CD4-positive, alpha-beta T cell (primary cell): ENCODE measurements at regions of chr2 and their contacts with region 1.

Region 1: DNA sequence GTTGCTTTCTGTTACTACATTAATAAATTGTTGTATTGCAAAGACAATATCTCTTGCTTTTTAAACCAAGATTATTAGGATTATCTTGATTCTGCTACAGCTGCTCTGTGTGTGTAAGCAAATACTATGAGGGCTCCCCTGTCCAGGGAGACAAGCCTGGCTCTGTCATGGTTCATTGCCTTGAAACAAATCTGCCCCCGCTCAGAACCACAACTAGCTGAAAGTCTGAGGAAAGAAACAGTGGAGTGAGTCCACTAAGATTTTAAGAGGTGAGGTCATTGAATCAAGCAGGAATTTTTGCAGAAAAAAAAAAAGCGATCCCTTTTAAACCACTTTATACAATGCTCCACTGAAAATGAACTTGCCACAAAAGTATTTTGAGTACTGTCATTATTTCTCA is 30.8 kb upstream of the LRRTM4 start:
- DNase-seq: no peak
- ATAC-seq: no peak
- H3K4me3 ChIP-seq: no peak overlapping the region
- H3K4me3 Mint-ChIP-seq: no peak overlapping the region
- H3K27ac ChIP-seq: no peak overlapping the region
- H3K27ac Mint-ChIP-seq: no peak overlapping the region
- H3K4me1 ChIP-seq: no peaks in the 10 kb centered on the region
- H3K4me1 Mint-ChIP-seq: no peaks in the 10 kb centered on the region
- H3K27me3 ChIP-seq: no peaks in the 10 kb centered on the region
- H3K27me3 Mint-ChIP-seq: no peaks in the 10 kb centered on the region
- CTCF ChIP-seq: no peak

Region 2: GRCh38 chr2:77418537-77418936 is 134.4 kb before region 1 on chr2:
- CTCF ChIA-PET with region 1: no interaction called
- POLR2A ChIA-PET with region 1: no interaction called
- intact Hi-C with region 1: no loop called
- DNase-seq: no peak
- ATAC-seq: no peak
- H3K4me3 ChIP-seq: no peak overlapping the region
- H3K4me3 Mint-ChIP-seq: no peak overlapping the region
- H3K27ac ChIP-seq: no peak overlapping the region
- H3K27ac Mint-ChIP-seq: no peak overlapping the region
- H3K4me1 ChIP-seq: no peaks in the 10 kb centered on the region
- H3K4me1 Mint-ChIP-seq: no peaks in the 10 kb centered on the region
- H3K27me3 ChIP-seq: no peaks in the 10 kb centered on the region
- H3K27me3 Mint-ChIP-seq: no peaks in the 10 kb centered on the region
- CTCF ChIP-seq: no peak

Region 3: GRCh38 chr2:77469106-77469505 is 83.8 kb before region 1 on chr2:
- CTCF ChIA-PET with region 1: no interaction called
- POLR2A ChIA-PET with region 1: no interaction called
- intact Hi-C with region 1: no loop called
- DNase-seq: no peak
- ATAC-seq: no peak
- H3K4me3 ChIP-seq: no peak overlapping the region
- H3K4me3 Mint-ChIP-seq: no peak overlapping the region
- H3K27ac ChIP-seq: no peak overlapping the region
- H3K27ac Mint-ChIP-seq: no peak overlapping the region
- H3K4me1 ChIP-seq: no peaks in the 10 kb centered on the region
- H3K4me1 Mint-ChIP-seq: no peaks in the 10 kb centered on the region
- H3K27me3 ChIP-seq: no peaks in the 10 kb centered on the region
- H3K27me3 Mint-ChIP-seq: no peaks in the 10 kb centered on the region
- CTCF ChIP-seq: no peak

Region 4: GRCh38 chr2:77512507-77512906 is 40.4 kb before region 1 on chr2:
- CTCF ChIA-PET with region 1: no interaction called
- POLR2A ChIA-PET with region 1: no interaction called
- intact Hi-C with region 1: loop called in 1 of 2 experiments (anchors 5 kb)
- DNase-seq: no peak
- ATAC-seq: no peak
- H3K4me3 ChIP-seq: no peak overlapping the region
- H3K4me3 Mint-ChIP-seq: no peak overlapping the region
- H3K27ac ChIP-seq: no peak overlapping the region
- H3K27ac Mint-ChIP-seq: no peak overlapping the region
- H3K4me1 ChIP-seq: no peaks in the 10 kb centered on the region
- H3K4me1 Mint-ChIP-seq: no peaks in the 10 kb centered on the region
- H3K27me3 ChIP-seq: no peaks in the 10 kb centered on the region
- H3K27me3 Mint-ChIP-seq: no peaks in the 10 kb centered on the region
- CTCF ChIP-seq: no peak

Region 5: DNA sequence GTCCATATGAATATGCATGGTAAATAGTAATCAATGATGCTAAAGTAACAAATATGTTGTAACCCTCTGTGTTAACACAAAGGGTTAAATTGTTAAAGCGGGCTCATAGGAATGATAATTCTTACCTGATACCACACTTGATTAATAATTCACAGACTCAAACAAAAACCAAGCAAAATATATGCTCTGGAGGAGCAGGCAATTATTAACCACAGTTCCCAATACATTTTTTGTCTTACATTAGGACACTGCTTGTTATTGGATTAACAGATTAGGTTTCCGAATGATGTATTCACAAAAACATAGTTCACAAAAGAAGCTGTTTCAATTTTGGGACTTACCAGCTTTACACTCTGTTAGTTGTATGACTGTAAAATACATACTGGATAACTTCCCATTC is 270.1 kb after region 1 on chr2:
- CTCF ChIA-PET with region 1: no interaction called
- POLR2A ChIA-PET with region 1: no interaction called
- intact Hi-C with region 1: no loop called
- DNase-seq: no peak
- ATAC-seq: no peak
- H3K4me3 ChIP-seq: no peak overlapping the region
- H3K4me3 Mint-ChIP-seq: no peak overlapping the region
- H3K27ac ChIP-seq: no peak overlapping the region
- H3K27ac Mint-ChIP-seq: no peak overlapping the region
- H3K4me1 ChIP-seq: no peaks in the 10 kb centered on the region
- H3K4me1 Mint-ChIP-seq: no peaks in the 10 kb centered on the region
- H3K27me3 ChIP-seq: no peaks in the 10 kb centered on the region
- H3K27me3 Mint-ChIP-seq: no peaks in the 10 kb centered on the region
- CTCF ChIP-seq: no peak